ENCODE measurements at regions of chr3 and their contacts with region 1.

Region 1: DNA sequence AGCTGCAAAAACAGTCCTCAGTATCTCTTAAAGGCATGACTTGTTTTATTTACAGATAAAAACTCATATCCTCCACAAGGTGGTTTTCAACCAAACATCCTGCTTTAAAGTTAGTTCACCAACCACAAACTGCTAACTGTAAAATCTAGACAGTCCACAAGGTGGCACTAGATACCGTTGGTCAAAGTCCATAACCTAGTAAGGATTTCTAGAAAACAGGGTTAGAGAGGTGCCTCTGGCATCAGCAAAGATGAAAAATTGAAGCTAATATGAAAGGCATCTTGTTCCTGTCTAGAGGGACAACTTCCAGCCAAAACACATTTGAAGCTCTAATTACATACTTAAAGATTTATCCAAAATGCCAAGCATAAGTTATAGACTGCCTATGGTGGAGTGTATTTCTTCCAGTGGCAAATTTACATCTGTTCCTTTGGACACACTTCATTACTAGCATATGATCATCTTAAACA is 56.0 kb downstream of the ZMAT3 start:
- DNase-seq: peak; percentile 65
- ATAC-seq: peak; percentile 83
- H3K4me3 Mint-ChIP-seq: no peak overlapping the region
- H3K27ac Mint-ChIP-seq: no peak overlapping the region
- H3K4me1 Mint-ChIP-seq: peaks cover 35% of the 10 kb centered on the region
- H3K27me3 Mint-ChIP-seq: peaks cover 4% of the 10 kb centered on the region

Region 2: GRCh38 chr3:178170698-178171535 is 844.7 kb before region 1 on chr3:
- CTCF ChIA-PET with region 1: no interaction called
- POLR2A ChIA-PET with region 1: no interaction called
- intact Hi-C with region 1: no loop called
- DNase-seq: no peak
- ATAC-seq: no peak
- H3K4me3 Mint-ChIP-seq: no peak overlapping the region
- H3K27ac Mint-ChIP-seq: no peak overlapping the region
- H3K4me1 Mint-ChIP-seq: no peaks in the 10 kb centered on the region
- H3K27me3 Mint-ChIP-seq: no peaks in the 10 kb centered on the region

Region 3: GRCh38 chr3:179000144-179000543 is 15.4 kb before region 1 on chr3:
- CTCF ChIA-PET with region 1: interaction called, 3 read pairs
- POLR2A ChIA-PET with region 1: interaction called, 3 read pairs
- intact Hi-C with region 1: loop called in 1 of 2 experiments (anchors 2 kb)
- DNase-seq: no peak
- ATAC-seq: peak; percentile 98
- H3K4me3 Mint-ChIP-seq: no peak overlapping the region
- H3K27ac Mint-ChIP-seq: peak overlapping the region; percentile 84
- H3K4me1 Mint-ChIP-seq: peaks cover 17% of the 10 kb centered on the region
- H3K27me3 Mint-ChIP-seq: no peaks in the 10 kb centered on the region

Region 4: GRCh38 chr3:179027326-179027900 is 11.8 kb after region 1 on chr3:
- CTCF ChIA-PET with region 1: interaction called, 10 read pairs
- POLR2A ChIA-PET with region 1: no interaction called
- intact Hi-C with region 1: no loop called
- DNase-seq: peak; percentile 63
- ATAC-seq: peak; percentile 87
- H3K4me3 Mint-ChIP-seq: no peak overlapping the region
- H3K27ac Mint-ChIP-seq: peak overlapping the region; percentile 80
- H3K4me1 Mint-ChIP-seq: peaks cover 24% of the 10 kb centered on the region
- H3K27me3 Mint-ChIP-seq: no peaks in the 10 kb centered on the region

Region 5: DNA sequence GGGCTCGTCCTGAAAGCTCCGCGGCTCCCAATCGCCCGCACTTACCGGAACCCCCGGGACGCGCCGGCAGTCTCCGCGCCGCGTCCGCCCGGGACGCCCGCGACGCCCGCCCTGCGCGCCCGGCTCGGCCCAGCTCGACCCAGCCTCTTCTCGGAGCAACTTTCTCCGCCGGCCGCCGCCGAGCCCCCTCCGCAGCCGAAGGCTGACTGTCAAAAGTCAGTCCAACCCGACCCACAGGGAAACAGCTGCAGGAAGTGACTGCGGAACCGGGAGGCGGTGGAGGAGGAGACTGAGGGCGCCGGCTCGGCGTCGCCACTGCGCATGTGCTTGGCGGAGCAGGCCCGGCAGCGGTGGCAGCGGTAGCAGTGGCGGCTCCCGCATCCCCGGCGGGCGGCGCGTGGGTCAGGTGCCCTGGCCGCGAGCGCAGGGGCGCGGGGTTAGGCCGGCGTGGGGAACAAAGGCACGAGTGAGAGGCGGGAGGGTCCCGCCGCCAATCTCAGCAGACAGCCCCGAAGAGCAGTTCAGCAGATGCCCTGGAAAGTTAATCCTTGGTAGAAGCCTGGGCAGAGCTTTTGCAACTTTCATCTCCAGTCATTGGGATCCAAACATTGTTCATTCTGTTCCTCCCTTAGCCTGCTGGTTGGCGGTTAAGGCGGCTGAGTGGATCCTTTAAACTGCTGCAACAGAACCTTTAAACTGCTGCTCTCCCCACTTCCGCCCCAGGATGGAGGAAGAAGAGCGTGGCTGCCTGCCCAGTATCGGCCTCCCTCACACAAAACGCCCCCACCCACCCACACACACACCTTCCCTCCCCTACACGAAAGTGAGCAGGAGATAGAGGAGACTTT is 56.2 kb after region 1 on chr3 and contains the start of gene ZMAT3:
- CTCF ChIA-PET with region 1: interaction called, 9 read pairs
- POLR2A ChIA-PET with region 1: no interaction called
- intact Hi-C with region 1: loop called (anchors 1 kb)
- DNase-seq: peak; percentile 90
- ATAC-seq: peak; percentile 86
- H3K4me3 Mint-ChIP-seq: peak within 1 kb of the TSS; percentile 95
- H3K27ac Mint-ChIP-seq: peak within 1 kb of the TSS; percentile 92
- H3K4me1 Mint-ChIP-seq: peaks cover 41% of the 10 kb centered on the region
- H3K27me3 Mint-ChIP-seq: no peaks in the 10 kb centered on the region
- total RNA-seq, gene ZMAT3: 9.5 to 9.9 TPM

Region 6: DNA sequence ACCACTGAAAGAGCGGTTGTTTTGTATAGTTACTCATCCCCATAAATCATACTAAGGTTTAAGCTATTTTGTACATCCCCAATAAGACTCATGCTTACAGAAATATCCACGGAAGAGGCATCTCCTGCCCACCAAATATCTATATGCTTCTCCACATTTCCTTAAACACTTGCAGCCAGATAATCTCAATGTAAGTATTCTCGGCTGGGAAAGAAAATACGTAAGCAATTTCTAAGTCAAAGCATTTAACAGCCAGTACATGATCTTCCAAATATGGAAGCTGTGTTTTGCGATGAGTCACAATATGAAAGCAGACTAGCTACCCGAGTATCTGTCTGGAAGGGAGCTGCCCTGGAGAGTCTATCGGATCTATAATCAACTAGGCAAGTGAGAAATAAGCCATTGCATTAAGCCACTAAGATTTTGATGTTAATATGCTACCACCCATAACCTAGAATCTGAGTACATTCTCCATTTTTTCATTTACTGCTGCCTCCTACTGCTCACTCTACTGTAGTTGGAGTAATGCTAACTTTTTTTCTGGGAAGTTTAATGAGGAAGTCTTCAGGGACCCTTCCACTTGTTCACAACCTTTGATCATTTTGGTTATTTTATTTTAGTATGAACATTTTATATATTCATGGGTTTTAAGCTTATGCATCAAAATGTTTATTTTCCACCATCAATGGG is 82.9 kb after region 1 on chr3:
- CTCF ChIA-PET with region 1: interaction called, 11 read pairs
- POLR2A ChIA-PET with region 1: no interaction called
- intact Hi-C with region 1: no loop called
- DNase-seq: no peak
- ATAC-seq: no peak
- H3K4me3 Mint-ChIP-seq: no peak overlapping the region
- H3K27ac Mint-ChIP-seq: no peak overlapping the region
- H3K4me1 Mint-ChIP-seq: no peaks in the 10 kb centered on the region
- H3K27me3 Mint-ChIP-seq: no peaks in the 10 kb centered on the region

Region 7: GRCh38 chr3:179528772-179529171 is 513.2 kb after region 1 on chr3:
- CTCF ChIA-PET with region 1: no interaction called
- POLR2A ChIA-PET with region 1: no interaction called
- intact Hi-C with region 1: no loop called
- DNase-seq: no peak
- ATAC-seq: no peak
- H3K4me3 Mint-ChIP-seq: no peak overlapping the region
- H3K27ac Mint-ChIP-seq: no peak overlapping the region
- H3K4me1 Mint-ChIP-seq: no peaks in the 10 kb centered on the region
- H3K27me3 Mint-ChIP-seq: peaks cover 10% of the 10 kb centered on the region